ENCODE measurements at regions of chr7 and their contacts with region 1.

Region 1: DNA sequence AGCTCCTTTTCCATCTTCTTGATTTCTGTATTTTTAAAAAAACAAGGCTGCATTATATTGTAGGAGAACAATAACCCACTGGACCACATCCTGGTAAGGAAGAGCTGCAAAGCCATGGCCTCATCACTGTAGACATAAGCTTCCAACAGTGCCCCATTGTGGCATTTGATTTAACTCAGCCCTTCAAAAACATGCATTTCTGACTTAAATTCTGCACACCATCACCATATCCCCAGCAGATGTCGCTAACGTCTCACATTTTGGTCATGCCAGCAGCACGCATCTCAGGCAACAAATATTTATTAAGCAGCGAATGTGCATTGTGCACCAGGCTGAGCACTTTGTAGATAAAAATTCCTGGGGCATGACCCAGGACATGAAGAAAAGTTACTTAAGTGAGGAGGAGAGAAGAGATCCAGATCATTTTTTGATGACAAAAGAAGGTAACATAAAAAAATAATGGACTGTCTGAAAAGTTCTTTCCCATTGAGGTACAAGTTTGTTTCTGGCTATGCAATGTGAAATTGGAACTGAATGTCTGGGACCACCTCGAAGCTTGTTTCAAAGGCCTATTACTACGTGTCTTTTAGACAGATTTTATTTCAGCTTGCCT is 164.6 kb upstream of the CDCA7L start:
- DNase-seq: no peak
- ATAC-seq: peak; percentile 80

Region 2: GRCh38 chr7:21469894-21470293 is 640.4 kb before region 1 on chr7:
- intact Hi-C with region 1: no loop called
- DNase-seq: no peak
- ATAC-seq: no peak

Region 3: DNA sequence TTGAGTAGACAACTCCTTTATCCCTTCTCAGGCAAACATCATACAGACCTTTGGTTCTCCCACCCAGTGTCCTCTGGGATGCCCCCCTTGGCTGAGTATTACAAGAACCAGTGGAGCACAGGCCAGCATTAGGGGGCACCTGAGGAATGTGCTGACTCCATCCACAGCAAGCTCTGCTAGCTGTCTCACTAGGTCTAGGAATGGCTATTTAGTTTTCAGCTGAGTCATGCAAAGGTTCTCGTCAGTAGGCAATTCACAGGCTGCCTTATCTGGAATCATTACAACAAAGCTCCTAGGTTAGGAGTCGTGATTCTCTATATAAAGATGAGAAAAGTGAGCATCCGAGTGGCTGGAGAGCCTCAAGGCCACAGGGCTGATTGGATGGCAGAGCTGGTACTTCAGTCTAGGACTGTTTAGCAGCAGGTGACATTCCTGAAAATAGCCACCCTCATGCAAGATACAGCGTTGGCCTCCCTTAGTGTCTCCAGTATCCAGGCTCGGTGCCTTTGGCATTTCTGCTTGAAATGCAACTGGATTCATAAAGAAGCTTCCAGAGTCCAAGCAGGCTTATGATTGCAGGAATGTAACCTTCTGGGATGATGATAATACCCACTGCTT is 240.4 kb before region 1 on chr7:
- intact Hi-C with region 1: no loop called
- DNase-seq: no peak
- ATAC-seq: peak; percentile 78

Region 4: GRCh38 chr7:22295402-22296264 is 185.3 kb after region 1 on chr7:
- intact Hi-C with region 1: loop called (anchors 5 kb)
- DNase-seq: no peak
- ATAC-seq: peak; percentile 38

Region 5: DNA sequence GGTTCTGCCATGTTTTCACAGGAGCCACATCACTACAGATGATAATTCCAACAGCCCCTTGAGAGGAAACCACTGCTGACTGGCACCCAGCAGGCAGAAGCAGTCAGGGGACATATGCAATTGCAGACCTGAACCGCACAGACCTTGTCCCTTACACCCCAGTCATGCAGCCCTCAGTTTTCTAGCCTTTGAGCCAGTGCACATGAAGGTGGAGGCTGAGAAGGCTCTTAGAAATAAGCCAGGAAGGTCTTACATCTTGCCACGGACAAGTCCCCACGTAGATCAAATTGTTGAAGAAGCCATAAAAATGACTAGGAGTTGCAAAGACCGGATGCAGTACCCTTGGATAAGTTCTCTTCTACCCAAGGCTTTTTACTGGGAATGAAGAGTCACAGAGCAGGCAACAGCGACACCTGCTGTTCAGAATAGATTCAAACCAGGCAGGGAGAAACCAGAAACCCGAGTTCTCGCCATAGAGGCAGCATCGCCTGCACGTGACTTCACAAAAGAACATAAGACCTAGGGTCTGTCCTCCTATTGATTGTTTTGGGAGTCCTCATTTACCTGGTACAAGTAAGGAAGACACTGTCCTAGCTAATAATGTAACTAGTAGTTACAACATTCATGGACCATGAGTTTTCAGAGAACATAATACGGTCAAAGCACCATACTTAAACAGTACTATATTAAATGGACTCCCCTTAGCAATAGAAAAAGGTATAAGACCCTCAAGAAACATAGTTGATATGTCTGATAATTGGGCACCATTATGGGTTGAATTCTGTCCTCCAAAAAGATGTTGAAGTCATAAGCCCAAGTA is 378.5 kb after region 1 on chr7:
- intact Hi-C with region 1: loop called (anchors 2 kb)
- DNase-seq: peak; percentile 39
- ATAC-seq: peak; percentile 82

Measured in left ventricle myocardium superior (tissue), 1 donor.